ENCODE measurements at regions of chr5 and their contacts with region 1.

Region 1: DNA sequence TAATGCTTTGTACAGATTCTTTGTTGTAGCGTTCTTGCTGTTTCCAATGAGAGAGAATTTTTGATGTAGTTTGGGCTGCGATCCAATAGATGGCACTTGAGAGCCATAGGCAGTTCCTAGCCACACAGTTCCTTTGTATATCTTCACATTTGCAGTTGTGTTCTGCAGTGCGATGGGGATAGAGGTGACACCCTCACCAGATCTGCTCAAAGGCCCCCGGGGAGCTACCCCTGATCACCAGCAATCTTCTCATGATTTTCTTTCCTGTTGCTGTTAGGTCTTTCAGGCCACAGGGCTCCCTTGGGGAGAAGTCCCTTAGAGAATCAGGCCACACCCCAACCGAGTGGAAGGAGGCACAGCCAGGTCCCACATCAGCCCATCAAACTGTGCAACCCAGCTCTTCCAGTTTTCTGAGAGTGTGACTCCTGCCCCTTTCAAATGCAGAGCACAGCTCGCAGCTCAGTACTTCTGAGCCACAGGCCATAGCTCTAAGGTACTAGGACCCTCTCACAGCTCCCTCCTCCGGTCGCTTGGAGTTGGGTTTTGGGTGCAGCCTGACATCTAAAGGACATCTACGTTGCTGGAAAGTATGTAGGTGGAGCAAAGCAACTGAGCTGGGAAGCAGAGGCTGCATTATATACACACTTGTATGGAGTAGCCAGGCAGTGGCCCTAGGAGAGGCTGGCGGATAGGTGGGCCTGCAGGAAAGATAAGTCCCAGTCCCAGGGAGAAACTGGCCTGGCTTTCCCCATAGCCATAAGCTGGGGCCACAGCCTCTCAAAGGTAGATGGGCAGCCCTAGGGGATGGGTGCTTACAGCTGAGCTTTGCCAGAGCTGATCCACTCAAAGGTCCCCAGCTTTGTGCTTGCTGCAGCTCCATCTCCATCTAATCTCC is 353.5 kb downstream of the SLCO4C1 start:
- DNase-seq: peak; percentile 68
- ATAC-seq: peak; percentile 81
- H3K4me3 ChIP-seq: no peak overlapping the region
- H3K27ac ChIP-seq: no peak overlapping the region
- H3K4me1 ChIP-seq: no peaks in the 10 kb centered on the region
- H3K27me3 ChIP-seq: peaks cover 2% of the 10 kb centered on the region; the same call in 1 of the 2 replicates
- CTCF ChIP-seq: peak; percentile 87

Region 2: GRCh38 chr5:101955891-101956290 is 13.3 kb after region 1 on chr5:
- CTCF ChIA-PET with region 1: no interaction called
- POLR2A ChIA-PET with region 1: no interaction called
- intact Hi-C with region 1: no loop called
- DNase-seq: no peak
- ATAC-seq: no peak
- H3K4me3 ChIP-seq: no peak overlapping the region
- H3K27ac ChIP-seq: no peak overlapping the region
- H3K4me1 ChIP-seq: no peaks in the 10 kb centered on the region
- H3K27me3 ChIP-seq: peaks cover 17% of the 10 kb centered on the region
- CTCF ChIP-seq: no peak

Region 3: DNA sequence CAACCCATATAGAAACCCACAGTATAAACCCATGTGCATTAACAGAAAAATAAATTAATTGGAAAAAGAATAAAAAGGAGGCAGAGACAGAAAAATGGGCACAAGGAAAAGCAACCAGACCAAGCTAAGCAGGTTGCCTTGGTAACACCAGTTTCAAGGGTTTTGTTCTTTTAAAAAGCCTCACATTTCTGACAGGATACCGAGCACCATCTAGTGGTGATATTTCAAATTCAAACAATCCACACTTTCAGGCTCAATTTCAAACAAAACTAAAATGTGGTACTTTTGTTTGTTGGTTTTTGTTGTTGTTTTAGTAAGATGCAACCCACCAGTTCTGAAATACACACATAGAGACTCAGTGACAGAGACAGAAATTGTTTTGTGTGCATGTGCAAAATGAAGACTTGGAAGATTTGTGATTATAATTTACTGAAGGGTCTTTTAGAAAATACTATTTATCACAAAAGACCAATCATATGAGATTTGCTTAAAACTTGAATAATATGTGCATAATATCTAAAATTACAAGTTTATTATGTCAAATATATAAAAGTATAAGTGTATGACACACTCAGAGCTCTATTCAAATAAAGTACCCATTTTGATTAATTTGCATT is 35.3 kb after region 1 on chr5:
- CTCF ChIA-PET with region 1: no interaction called
- POLR2A ChIA-PET with region 1: no interaction called
- intact Hi-C with region 1: loop called (anchors 1 kb)
- DNase-seq: peak; percentile 75
- ATAC-seq: peak; percentile 76
- H3K4me3 ChIP-seq: no peak overlapping the region
- H3K27ac ChIP-seq: no peak overlapping the region
- H3K4me1 ChIP-seq: no peaks in the 10 kb centered on the region
- H3K27me3 ChIP-seq: no peaks in the 10 kb centered on the region
- CTCF ChIP-seq: peak; percentile 91

Region 4: DNA sequence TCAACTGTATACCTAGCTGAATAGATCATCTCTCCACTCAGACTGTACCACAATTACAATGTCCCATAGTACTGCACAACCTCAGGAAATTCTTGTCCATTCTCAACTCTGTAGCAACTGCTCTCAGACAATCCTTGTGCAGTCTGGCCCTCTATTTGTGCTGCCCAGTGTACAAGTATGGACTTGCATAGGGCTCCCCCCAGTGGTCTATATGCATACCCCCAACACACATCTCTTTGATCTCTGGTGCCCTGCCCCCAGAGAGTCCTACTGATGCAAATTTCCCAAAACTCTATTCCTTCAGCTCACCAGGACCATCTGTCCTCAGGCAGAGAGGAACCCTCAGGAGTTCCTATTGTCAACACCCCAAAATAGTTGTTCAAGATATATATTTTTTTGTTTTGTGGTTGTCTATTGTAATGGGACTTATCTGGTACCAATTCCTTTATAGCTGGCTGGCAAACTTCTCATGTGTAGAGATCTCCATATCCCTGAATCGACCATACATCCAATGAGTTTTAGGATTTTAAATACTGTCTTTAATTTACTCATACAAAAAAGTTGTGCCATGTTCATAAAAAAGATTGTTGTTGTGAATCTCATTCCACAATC is 148.3 kb after region 1 on chr5:
- CTCF ChIA-PET with region 1: no interaction called
- POLR2A ChIA-PET with region 1: no interaction called
- intact Hi-C with region 1: loop called (anchors 5 kb)
- DNase-seq: peak; percentile 53
- ATAC-seq: peak; percentile 93
- H3K4me3 ChIP-seq: no peak overlapping the region
- H3K27ac ChIP-seq: no peak overlapping the region
- H3K4me1 ChIP-seq: no peaks in the 10 kb centered on the region
- H3K27me3 ChIP-seq: 0 out of 2 replicates have a peak, but pooled peaks cover 14% of the 10 kb centered on the region
- CTCF ChIP-seq: peak; percentile 72

Region 5: DNA sequence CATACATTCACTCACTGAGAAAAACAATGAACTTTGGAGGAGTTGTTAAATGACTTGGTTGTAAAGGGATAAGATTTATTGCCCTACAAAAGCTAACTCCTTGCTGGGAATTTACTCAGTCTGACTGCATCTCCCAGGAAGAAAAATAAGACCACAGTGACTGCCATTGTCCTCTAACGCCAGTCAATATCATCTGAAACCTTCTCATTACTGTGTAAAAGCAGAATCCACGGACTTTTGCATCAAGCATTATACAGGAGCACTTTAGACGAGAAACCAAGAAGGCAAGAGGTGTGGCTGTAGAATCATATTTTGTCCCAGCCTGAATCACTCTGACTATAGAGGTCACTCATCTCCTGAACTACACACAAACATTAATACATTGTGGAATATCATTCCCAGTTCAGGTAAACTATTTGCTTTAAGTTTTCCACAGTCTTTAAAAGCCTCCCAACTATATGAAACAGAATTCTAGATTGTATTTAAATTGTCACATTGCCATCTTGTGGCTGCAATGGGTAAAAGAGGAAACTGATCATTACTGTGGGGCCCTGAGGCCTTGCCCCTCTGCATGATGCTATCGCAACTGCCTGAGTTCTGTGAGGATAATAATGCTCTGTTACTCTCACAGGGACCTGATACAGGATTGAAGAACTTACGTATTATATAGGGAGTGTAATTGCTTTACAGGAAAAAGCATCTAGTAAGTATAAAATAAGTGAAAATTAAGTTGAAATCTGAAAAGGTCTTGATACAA is 210.6 kb after region 1 on chr5:
- CTCF ChIA-PET with region 1: no interaction called
- POLR2A ChIA-PET with region 1: no interaction called
- intact Hi-C with region 1: loop called (anchors 1 kb)
- DNase-seq: peak; percentile 68
- ATAC-seq: peak; percentile 95
- H3K4me3 ChIP-seq: no peak overlapping the region
- H3K27ac ChIP-seq: no peak overlapping the region
- H3K4me1 ChIP-seq: no peaks in the 10 kb centered on the region
- H3K27me3 ChIP-seq: no peaks in the 10 kb centered on the region
- CTCF ChIP-seq: peak; percentile 92

Region 6: GRCh38 chr5:102223542-102224477 is 281.2 kb after region 1 on chr5:
- CTCF ChIA-PET with region 1: no interaction called
- POLR2A ChIA-PET with region 1: no interaction called
- intact Hi-C with region 1: loop called (anchors 2 kb)
- DNase-seq: peak; percentile 88
- ATAC-seq: peak; percentile 42; the same call in 1 of the 2 replicates
- H3K4me3 ChIP-seq: no peak overlapping the region
- H3K27ac ChIP-seq: no peak overlapping the region
- H3K4me1 ChIP-seq: no peaks in the 10 kb centered on the region
- H3K27me3 ChIP-seq: peaks cover 25% of the 10 kb centered on the region; the same call in 1 of the 2 replicates
- CTCF ChIP-seq: peak; percentile 95